GM10248 (cell line): ENCODE measurements at regions of chr19 and their contacts with region 1.

Region 1: GRCh38 chr19:38891771-38892170 is 7.6 kb downstream of the SIRT2 start:
- DNase-seq: no peak
- CTCF ChIP-seq: no peak

Region 2: GRCh38 chr19:38514812-38515633 is 376.7 kb before region 1 on chr19:
- CTCF ChIA-PET with region 1: interaction called, 15 read pairs
- POLR2A ChIA-PET with region 1: no interaction called
- DNase-seq: peak; percentile 90
- CTCF ChIP-seq: peak; percentile 91

Region 3: DNA sequence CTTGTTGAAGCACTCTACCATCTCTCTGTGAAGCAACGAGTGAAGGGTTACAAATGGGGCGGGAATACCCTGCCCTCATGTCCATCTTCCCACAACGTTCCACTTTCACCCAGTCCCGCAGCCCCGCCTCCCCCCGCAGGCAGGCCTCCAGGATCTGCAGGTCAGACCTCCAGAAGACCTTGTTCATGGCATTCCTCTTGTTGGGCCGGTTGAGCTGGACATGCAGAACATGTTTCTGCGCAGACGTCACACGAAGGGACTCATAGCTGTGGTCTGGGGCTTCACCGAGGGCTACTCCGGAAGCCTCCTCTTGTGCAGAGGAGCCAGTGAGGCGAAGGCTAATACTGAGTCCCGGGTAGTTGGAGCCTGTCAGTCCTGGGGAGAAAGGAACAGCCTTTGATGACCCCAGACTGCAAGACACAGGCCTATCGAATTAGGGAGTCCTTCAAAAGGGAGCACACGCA is 60.6 kb before region 1 on chr19:
- CTCF ChIA-PET with region 1: interaction called, 12 read pairs
- POLR2A ChIA-PET with region 1: no interaction called
- DNase-seq: peak; percentile 74
- CTCF ChIP-seq: no peak

Region 4: DNA sequence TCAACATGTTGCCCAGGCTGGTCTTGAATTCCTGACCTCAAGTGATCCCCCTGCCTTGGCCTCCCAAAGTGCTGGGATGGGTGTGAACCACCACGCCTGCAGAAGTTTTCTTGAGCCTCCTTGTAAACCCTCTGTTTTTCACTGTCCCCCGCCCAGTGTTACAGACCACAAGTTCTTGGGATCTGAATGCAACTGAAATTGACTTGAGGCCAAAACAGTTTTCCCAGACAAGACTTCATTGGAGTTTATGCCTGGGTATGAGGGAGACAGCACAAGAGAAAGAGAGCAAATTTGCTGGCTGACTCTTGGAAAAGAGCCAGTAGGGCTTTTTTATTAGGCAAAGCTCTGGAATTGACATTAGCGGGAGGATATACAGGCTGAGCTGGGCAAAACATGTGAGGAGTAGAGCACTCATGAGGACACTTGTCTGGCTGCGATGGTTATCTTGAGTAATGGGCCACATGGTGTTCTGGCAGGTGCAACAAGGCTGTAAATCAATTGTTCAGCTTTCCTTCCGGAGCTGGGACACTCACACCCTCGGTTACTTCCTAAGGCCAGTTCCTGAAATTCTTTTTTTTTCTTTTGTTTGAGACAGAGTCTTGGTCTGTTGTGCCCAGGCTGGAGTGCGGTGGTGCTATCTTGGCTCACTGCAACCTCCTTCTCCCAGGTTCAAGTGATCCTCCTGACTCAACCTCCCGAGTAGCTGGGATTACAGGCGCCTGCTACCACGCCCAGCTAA is 29.3 kb before region 1 on chr19:
- CTCF ChIA-PET with region 1: interaction called, 17 read pairs
- POLR2A ChIA-PET with region 1: no interaction called
- DNase-seq: no peak
- CTCF ChIP-seq: no peak

Region 5: GRCh38 chr19:38869856-38870607 is 21.7 kb before region 1 on chr19:
- CTCF ChIA-PET with region 1: interaction called, 64 read pairs
- POLR2A ChIA-PET with region 1: no interaction called
- DNase-seq: peak; percentile 92
- CTCF ChIP-seq: peak; percentile 99

Region 6: DNA sequence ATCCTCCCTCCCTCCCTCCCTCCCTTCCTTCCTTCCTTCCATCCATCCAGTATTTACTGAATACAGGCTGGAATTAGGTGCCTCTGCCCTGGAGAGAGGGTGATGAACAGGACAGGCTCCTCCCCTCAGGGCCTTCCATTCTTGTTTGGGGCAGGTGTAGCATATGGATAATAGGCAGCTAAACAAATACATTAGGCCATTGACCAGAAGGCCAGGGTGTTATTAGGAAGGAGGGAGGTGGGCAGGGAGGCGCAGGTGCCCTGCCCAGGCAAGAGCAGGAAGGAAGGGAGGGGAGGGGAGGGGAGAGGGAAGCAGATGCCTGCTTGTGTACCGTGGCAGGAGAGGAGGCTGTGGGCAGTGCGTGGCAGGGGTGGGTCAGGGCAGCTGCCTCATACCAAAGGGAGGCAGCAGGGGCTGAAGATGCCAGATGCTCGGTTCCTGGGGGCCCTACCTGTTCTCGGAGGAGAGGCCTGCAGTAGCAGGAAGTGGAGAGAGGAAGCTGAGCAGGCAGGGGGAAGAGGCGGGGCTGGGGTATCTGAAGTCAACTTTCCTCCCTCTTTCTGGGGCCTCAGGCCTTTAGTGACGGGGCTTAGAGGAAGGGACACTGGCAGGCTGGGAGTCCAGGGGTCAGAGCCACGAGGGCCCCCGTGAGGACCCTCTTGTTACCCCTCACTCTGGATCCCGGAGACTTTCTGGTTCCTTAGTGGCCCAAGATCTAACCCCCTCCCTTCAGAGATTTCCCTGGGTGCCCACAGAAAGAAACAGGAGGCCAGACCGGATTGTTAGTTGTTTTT is 13.8 kb before region 1 on chr19 and contains the start of gene RINL:
- CTCF ChIA-PET with region 1: interaction called, 64 read pairs
- POLR2A ChIA-PET with region 1: interaction called, 3 read pairs
- DNase-seq: peak; percentile 85
- CTCF ChIP-seq: no peak

Region 7: DNA sequence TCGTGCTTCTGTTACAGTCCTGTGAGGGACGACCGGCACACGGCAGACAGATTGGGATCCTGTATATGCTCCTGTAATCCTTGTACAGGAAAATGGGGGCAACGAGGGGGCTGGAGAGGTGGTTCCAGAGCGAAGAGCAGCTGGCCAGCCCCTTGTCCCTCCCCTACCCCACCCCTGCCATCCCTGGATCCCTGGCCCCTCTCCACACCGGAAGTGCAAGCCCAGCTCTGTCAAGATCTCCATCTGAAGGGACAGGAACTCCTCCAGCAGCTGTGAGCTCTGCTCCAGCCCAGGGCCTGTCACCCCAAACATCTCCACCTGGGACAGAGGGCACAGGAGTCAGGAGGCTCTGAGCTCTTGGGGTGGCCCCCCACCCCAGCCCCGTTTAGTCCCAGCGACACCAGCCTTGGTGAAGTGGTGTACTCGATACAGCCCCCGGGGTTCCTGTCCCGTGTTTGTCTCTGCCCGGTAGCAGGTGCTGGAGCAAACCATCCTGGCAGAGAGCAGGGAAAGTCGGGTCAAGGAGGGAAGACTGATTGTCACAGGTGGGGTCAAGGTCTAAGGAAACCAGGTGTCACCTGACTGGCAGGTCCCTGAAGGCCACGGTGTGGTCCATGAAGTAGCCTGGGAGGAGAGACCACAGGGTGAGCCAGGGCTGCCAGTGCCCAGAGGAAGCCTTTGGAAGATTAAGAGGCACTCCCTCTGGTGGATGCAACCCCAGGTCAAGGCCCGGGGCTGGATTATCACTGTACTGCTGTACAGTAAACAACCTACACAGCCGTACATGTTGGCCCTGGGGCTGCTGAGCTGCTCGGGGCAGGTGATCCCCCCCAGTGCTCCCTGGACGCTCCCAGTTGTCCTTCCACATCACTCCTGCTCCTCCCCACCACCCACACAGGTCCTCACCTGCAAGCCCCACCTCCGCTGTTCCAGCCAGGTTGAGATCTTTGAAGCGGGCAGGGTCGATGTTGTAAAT is 26.0 kb after region 1 on chr19:
- CTCF ChIA-PET with region 1: interaction called, 10 read pairs
- POLR2A ChIA-PET with region 1: no interaction called
- DNase-seq: no peak
- CTCF ChIP-seq: no peak

Region 8: DNA sequence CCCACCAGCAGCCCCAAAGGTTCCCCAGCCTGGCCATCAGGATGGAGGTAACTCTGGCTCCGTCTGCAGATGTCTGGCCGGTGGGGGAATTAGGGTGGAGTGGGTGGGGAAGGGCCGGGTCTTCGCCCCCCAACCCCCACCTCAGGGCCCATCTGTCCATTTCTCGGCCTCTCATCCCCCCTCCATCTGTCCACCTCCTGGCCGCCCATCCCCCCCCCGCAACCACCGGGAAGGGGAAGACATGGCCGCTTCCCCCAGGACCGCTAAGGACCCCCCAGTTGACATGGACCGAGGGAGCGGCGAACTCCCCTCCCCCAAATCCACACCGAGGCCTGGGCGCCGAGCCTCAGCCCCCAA is 428.1 kb after region 1 on chr19:
- CTCF ChIA-PET with region 1: no interaction called
- POLR2A ChIA-PET with region 1: no interaction called
- DNase-seq: no peak
- CTCF ChIP-seq: no peak